Heart left ventricle (tissue), 16 donors: ENCODE measurements at regions of chr6 and their contacts with region 1.

Region 1: DNA sequence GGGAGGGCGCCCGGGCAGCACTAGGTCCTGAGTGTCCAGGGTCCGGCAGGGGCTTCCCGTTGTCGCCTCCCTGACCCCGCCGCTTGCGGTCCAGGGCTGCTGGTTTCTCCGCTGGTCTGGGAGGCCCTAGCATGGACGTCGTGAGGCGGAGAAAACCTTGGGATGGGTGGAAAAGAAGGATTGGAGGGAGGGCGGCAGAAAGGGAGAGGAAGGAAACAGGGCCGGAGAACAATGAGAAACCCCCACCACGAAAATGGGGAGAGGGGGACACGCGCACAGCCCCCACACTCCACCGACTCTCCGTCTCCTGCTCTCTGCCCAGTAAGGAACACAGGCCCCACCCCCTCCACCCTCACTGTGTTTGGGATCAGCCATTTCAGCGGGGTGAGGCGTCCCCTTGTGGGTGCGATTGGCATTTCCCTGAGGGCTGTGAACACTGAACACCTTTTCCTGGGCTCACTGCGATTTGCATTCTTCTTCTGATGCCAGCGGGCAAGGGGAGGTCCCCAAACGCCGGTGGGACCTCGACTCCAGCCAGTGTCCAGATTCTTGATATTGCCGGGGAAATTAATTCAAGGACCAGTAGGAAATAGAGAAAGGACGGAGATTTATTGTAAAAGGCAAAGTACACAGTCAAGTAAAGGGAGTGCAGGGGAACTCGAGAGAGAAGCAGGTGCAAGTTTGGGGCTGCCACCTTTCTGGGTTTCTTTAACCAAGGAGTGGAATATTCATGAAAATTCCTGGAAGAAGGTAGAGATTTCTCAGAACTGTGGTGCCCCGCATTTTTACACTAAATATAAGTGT is 3.3 kb upstream of the RAET1G start:
- DNase-seq: peak; percentile 87 to 93 (median 90)
- ATAC-seq: peak; percentile 84 to 93 (median 92)
- H3K4me3 ChIP-seq: peak overlapping the region; percentile 42 to 63 (median 56)
- H3K27ac ChIP-seq: peak overlapping the region in 10 of 12 donors; percentile 30 to 70 (median 58)
- H3K4me1 ChIP-seq: peaks cover 0 to 32% (median 20%) of the 10 kb centered on the region in 12 donors
- H3K27me3 ChIP-seq: peaks cover 0 to 58% (median 24%) of the 10 kb centered on the region in 9 donors
- CTCF ChIP-seq: peak; percentile 72 to 95 (median 86)
- POLR2A ChIP-seq: no peak

Region 2: DNA sequence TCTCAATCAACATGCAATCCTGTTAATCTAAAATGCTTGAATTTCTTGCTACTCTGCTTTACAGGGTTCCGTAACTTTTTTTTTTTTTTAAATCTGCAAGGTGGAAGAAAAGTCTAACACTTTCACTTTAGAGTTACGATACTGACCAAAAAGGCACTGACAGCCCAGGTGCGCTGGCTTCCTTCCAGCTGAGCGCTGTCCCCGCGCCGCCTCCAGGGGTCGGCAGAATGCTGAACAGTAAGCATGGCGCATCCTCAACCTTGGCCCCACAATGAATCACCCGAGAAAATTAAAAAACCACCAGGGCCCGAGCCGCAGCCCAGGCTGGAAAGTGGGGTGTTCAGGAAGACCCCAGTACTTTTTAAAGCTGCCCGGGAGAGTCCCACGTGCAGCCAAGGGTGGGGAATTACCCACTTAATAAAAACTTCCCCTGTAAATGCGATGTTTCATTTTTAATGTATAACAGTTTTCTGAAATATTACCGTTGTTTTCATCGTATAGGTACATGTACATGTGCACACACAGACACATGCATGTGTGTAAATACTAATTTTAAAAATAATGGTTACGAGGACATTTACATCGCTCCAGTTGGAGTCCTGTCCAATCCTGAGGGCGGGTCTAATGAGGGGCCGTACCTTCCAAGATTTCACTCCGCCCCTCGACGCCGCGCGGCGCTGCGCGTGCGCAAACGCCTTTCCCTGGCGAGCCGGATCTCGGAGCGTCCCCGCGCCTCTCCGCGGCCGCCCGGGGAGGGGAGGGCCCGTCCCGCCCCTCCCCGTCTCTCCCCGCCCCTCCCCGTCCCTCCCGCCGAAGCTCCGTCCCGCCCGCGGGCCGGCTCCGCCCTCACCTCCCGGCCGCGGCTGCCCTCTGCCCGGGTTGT is 360.4 kb before region 1 on chr6 and contains the start of gene GINM1:
- intact Hi-C with region 1: loop called in 3 of 10 experiments (anchors 5 to 10 kb)
- DNase-seq: peak; percentile 93 to 98 (median 94)
- ATAC-seq: peak; percentile 95 to 98 (median 96)
- H3K4me3 ChIP-seq: peak within 1 kb of the TSS; percentile 60 to 100 (median 90)
- H3K27ac ChIP-seq: peak within 1 kb of the TSS; percentile 72 to 97 (median 92)
- H3K4me1 ChIP-seq: peaks cover 0 to 25% (median 9%) of the 10 kb centered on the region in 12 donors
- H3K27me3 ChIP-seq: no peaks in the 10 kb centered on the region
- CTCF ChIP-seq: peak; percentile 46 to 85 (median 58)
- POLR2A ChIP-seq: no peak
- total RNA-seq, gene GINM1: 42.4 to 60.5 (median 52.7) TPM

Region 3: GRCh38 chr6:149723771-149724417 is 202.3 kb before region 1 on chr6:
- intact Hi-C with region 1: loop called in 7 of 10 experiments (anchors 2 to 10 kb)
- DNase-seq: peak in 3 of 5 donors; percentile 21 to 41 (median 37)
- ATAC-seq: peak; percentile 45 to 91 (median 84)
- H3K4me3 ChIP-seq: no peak overlapping the region
- H3K27ac ChIP-seq: no peak overlapping the region
- H3K4me1 ChIP-seq: peaks cover 0 to 36% (median under 1%) of the 10 kb centered on the region in 12 donors
- H3K27me3 ChIP-seq: no peaks in the 10 kb centered on the region
- CTCF ChIP-seq: peak; percentile 57 to 80 (median 66)
- POLR2A ChIP-seq: no peak

Region 4: DNA sequence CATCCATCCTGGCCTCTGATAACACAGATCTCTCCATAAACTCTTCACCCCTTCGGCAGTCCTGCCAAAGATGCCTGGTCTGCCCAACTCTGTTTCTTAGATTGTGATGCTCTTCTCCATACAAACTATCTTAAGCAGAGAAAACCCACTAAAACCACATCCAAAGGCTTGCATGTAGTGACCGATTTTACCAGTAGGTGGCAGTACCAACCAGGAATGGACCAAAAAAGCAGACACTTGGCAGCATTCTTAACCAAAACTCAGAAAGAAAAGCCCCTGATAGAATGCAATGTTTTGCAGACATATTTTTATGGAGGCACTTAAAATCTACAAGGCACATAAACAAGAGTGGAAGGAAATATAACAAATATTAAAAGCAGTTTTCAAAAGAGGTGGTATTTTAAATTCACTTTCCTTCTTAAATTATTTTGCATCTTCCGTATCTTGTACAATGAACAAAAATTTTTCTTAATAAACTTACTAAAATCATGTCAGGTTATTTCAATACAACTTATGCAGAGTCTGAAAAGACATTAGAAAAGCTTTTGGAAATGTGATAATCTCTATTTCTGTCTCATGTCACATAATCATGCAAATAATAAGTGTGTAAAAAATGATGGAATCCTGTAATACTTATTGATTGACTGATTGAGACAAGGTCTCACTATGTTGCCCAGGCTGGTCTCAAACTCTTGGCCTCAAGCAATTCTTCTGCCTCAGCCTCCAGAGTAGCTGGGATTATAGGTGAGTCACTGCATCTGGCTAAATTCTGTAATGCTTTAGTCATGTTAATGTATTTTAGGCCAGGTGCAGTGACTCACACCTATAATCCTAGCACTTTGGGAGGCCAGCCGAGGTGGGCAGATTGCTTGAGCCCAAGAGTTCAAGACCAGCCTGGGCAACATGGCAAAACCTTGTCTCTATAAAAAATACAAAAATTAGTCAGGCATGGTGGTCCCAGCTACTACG is 91.4 kb before region 1 on chr6:
- intact Hi-C with region 1: loop called (anchors 1 to 2 kb)
- DNase-seq: peak in 2 of 5 donors; percentile 36 to 50
- ATAC-seq: peak in 2 of 4 donors; percentile 42 to 62
- H3K4me3 ChIP-seq: no peak overlapping the region
- H3K27ac ChIP-seq: no peak overlapping the region
- H3K4me1 ChIP-seq: no peaks in the 10 kb centered on the region
- H3K27me3 ChIP-seq: no peaks in the 10 kb centered on the region
- CTCF ChIP-seq: peak; percentile 85 to 96 (median 93)
- POLR2A ChIP-seq: no peak

Region 5: DNA sequence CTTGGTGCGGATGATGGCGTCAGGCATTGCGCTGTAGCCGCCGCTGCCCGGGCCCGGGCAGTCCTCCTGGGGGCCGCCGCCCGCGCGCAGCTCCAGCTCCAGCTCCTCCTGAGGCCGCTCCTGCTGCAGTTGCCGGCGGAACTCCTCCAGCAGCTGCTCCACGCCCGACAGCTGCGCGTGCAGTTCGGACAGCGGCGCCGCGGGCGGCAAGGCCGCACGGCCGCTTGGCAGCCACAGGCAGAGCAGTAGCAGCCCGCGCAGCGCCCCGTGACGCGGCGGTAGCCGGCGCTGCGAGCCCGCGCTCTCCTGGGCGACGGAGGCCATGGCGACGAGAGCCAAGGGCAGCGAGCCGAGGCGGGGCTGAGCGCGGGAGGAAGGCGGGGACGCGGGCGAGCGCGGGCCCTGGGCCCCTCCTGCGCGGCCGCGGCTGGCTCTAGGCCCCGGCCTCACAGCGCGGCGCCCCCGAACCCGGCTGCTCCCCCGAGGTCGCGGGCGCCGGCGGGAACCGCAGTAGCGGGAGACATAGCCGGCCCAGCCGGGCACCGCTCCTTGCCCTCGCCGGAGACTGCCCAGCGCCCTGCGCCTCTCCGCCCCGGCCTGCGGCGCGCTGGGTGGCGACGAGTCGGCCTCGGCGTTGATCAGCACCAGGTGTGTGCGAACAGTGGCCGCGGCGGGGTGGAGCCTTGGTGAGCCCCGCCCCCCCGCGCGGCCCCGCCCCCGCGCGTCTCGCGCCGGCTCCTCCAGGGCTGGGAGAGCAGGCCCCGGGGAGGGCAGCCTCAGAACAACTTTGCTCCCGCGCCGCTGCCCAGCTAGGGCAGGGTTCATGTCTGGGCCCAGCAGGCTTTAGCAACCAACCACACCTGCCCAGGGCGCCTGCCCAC is 62.2 kb before region 1 on chr6 and contains the start of gene LRP11:
- intact Hi-C with region 1: loop called in 1 of 10 experiments (anchors 10 kb)
- DNase-seq: peak; percentile 79 to 92 (median 85)
- ATAC-seq: peak; percentile 89 to 95 (median 94)
- H3K4me3 ChIP-seq: peak within 1 kb of the TSS; percentile 61 to 88 (median 72)
- H3K27ac ChIP-seq: peak within 1 kb of the TSS; percentile 57 to 94 (median 88)
- H3K4me1 ChIP-seq: peaks cover 0 to 36% (median 14%) of the 10 kb centered on the region in 12 donors
- H3K27me3 ChIP-seq: no peaks in the 10 kb centered on the region
- CTCF ChIP-seq: peak in 1 of 12 donors; percentile 19
- POLR2A ChIP-seq: peak in 1 of 2 donors; percentile 65
- total RNA-seq, gene LRP11: 10.2 to 23.8 (median 13.2) TPM

Region 6: DNA sequence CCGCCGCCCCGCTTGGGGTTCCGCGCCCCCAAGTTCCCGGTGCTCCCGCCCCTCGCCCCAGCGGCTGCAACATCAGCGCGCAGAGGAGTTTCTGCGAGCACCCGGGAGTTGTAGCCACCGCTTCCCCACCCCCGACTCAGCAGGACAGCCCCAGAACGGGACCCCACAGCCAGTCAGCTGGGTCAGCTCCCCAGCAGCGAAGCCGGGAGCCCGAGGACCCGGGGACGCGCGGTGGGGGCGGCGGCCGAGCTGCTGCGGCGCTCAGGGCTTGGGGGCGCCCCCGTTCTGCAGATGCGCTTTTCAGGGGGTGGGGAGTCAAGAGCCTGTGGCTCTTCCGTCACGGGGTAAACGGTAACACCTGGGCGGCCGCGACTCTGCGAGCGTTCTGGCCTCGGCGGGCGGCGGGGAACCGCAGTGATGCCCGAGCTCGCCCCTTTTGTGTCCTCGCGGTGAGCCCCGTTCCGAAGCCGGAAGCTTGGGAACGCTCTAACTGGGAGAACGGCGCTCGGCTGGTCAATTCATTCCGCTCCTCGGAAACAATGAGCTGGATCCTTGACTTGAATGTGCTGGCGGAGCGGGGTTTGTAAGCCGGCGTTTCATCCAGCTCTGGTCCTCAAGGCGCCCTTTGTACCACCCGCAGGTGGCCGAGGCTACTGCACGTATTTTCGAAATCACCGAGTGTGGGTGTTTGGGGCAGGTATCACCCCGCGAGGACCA is 674.3 kb after region 1 on chr6:
- intact Hi-C with region 1: no loop called
- DNase-seq: peak; percentile 66 to 75 (median 71)
- ATAC-seq: peak; percentile 48 to 80 (median 76)
- H3K4me3 ChIP-seq: peak overlapping the region; percentile 59 to 91 (median 80)
- H3K27ac ChIP-seq: peak overlapping the region; percentile 78 to 95 (median 89)
- H3K4me1 ChIP-seq: peaks cover 0 to 22% (median 3%) of the 10 kb centered on the region in 12 donors
- H3K27me3 ChIP-seq: peaks cover 0 to 18% (median 2%) of the 10 kb centered on the region in 9 donors
- CTCF ChIP-seq: peak; percentile 20 to 66 (median 45)
- POLR2A ChIP-seq: peak in 1 of 2 donors; percentile 16